A673 (cell line): ENCODE measurements at regions of chr21 and their contacts with region 1.

Region 1: GRCh38 chr21:36113647-36114428 is 21.0 kb upstream of the CBR3 start:
- DNase-seq: no peak
- H3K4me3 ChIP-seq: no peak overlapping the region
- H3K27ac ChIP-seq: peak overlapping the region; percentile 5
- H3K4me1 ChIP-seq: peaks cover 3% of the 10 kb centered on the region
- H3K27me3 ChIP-seq: no peaks in the 10 kb centered on the region
- CTCF ChIP-seq: no peak

Region 2: DNA sequence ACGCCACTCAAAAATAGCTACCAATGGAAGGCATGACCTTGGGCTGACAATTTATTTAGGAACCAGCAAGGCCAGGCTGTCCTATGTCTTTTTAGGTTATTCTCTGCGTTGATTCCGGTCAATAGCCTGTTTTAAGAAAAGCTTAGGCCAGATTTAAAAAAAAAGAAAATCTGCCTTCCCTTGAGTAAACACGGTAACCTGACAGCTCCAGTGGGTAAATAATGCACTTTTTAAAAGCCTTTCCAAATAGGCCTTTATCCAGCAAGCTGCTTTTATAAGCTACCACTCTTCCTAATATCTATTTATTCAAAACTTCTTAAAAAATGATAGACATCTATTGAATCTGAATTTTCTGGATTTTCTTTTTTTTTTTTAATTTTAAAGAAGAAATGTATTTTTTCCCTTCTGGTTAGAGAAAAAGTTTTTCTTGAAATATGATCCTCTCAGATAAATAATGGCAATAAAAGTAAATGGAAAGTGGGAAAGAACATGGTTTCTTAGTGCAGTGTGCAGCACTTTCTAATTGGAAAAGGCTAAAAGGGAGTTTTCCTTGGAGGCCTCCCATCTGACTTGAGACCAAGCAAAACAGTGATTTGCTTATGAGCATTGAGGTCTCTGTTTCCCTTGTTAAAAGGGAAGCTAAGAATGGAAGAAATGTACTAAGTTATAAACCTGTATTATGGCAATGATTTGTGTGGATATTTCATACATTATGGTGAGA is 783.7 kb before region 1 on chr21:
- CTCF ChIA-PET with region 1: no interaction called
- POLR2A ChIA-PET with region 1: interaction called, 16 read pairs
- intact Hi-C with region 1: no loop called
- DNase-seq: no peak
- H3K4me3 ChIP-seq: no peak overlapping the region
- H3K27ac ChIP-seq: no peak overlapping the region
- H3K4me1 ChIP-seq: no peaks in the 10 kb centered on the region
- H3K27me3 ChIP-seq: no peaks in the 10 kb centered on the region
- CTCF ChIP-seq: no peak

Region 3: DNA sequence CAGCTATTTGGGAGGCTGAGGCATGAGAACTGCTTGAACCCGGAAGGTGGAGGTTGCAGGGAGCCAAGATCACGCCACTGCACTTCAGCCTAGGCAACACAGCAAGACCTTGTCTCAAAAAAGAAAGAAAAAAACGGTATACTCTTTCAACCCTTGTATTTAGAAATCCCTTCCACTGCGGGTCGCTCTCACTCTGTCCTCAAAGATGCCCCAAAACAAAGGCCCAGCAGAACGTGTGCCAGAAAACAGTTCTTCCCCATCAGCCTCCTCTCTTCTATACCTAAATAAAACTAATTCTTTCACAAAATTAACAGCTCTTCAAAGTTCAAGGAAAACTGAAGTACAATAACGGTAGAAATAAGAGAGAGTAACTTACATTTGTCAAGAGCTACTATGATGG is 66.7 kb before region 1 on chr21:
- CTCF ChIA-PET with region 1: interaction called, 6 read pairs
- POLR2A ChIA-PET with region 1: no interaction called
- intact Hi-C with region 1: loop called (anchors 5 kb)
- DNase-seq: no peak
- H3K4me3 ChIP-seq: no peak overlapping the region
- H3K27ac ChIP-seq: no peak overlapping the region
- H3K4me1 ChIP-seq: no peaks in the 10 kb centered on the region
- H3K27me3 ChIP-seq: no peaks in the 10 kb centered on the region
- CTCF ChIP-seq: no peak

Region 4: DNA sequence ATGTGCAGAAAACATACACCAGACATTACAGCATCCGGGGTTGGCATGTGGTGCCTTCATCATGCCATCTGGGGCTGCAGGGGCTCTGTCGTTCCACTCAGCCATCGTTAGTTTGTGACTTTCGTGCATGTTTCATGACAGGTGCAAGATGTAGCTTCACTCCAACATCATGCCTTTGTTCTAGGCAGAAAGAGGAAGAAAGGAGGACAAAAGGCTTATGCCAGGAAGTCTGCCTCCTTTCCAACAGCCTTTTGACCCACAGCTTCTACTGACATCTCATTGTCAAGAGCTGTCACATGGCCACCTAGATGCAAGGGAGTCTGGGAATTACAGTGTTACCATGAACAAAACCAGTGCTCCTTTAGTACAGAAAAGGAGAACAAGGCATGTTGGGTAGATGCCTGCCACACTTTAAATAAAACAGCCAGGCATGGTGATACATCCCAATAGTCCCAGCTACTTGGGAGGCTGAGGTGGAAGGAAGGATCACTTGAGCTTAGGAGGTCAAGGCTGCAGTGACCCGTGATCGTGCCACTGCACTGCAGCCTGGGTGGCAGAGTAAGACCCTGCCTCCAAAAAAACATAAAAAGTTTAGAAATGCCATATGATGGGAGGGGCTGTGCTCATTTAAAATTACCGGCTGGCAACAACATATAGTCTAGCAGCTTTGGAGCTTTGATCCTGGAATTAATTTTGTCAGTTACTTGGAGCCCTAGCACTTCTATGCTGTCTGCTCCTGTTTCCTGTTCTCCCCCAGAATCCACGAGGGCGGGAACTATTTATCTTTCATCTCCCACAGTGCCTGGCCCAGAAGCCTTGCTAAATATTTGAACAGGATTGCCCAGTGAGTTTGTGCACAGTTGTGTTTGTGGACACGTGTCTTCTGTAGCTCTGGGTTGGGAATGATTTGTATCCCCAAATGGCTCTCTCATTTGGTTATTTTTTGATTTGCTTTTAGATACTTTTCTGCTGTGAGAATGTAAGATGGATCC is 50.2 kb after region 1 on chr21:
- CTCF ChIA-PET with region 1: no interaction called
- POLR2A ChIA-PET with region 1: no interaction called
- intact Hi-C with region 1: no loop called
- DNase-seq: no peak
- H3K4me3 ChIP-seq: no peak overlapping the region
- H3K27ac ChIP-seq: no peak overlapping the region
- H3K4me1 ChIP-seq: no peaks in the 10 kb centered on the region
- H3K27me3 ChIP-seq: no peaks in the 10 kb centered on the region
- CTCF ChIP-seq: no peak

Region 5: DNA sequence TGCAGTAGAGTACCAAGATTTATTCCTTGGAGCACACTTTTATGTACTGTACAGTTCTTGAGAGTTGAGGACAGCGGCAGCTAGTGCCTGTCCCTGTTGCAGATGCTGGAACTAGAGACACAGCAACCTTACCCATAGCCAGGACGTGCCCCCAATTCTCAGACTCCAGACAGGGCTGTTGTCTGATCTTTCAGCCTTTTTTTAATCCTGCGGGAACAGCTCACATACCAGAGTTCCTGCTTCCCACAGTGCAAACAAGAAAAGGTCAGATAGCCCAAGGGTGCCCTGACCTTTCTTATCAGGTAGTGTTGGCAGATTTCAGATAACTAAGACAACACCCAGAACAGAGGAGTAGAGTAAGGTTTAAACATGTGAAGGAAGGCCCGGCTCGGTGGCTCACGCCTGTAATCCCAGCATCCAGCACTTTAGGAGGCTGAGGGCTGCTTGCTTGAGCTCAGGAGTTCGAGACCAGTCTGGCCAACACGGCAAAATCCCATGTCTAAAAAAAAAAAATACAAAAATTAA is 121.3 kb after region 1 on chr21:
- CTCF ChIA-PET with region 1: no interaction called
- POLR2A ChIA-PET with region 1: no interaction called
- intact Hi-C with region 1: no loop called
- DNase-seq: no peak
- H3K4me3 ChIP-seq: no peak overlapping the region
- H3K27ac ChIP-seq: no peak overlapping the region
- H3K4me1 ChIP-seq: no peaks in the 10 kb centered on the region
- H3K27me3 ChIP-seq: no peaks in the 10 kb centered on the region
- CTCF ChIP-seq: no peak